PC-9 (cell line): ENCODE measurements at regions of chr14 and their contacts with region 1.

Region 1: DNA sequence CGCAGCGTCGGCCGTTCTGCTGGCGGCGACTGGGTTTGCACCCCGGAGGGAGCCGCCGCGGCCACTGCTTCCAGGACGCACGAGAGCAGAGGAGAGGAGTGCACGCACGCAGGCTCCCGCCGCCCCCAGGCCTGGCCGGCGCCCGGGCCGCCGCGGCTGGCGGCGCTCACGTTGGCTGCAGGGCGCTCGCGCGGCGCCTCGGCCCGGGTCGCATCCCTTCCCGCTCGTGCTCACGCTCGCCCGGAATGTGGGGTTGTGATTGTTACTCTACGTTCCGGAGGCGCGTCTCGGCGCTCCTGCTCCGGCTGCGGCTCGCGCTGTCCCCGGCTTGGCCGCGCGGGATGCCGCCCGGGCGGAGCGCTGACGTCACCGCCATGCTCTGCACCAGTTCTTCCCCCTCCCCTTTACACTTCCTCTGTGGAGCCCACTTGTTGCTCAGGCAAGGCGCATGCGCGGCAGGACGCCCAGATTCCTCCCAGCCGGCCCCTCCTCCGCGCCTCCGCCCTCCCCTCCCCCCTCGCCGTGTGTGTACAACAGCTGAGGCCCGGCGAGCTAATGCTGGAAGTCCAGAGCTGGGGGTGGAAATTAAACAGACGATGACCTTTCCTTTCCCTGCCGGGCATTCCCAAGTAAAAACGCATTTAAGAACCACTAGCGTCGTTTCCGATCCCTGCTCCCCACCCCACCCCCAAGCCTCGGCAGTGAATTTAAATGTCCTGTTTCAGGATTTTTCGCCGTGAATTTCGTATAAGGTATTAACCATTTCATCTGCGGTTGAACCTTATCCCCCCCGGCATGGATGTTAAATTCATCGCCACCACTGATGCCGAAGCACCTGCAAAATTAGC is at the start of gene IRF2BPL:
- DNase-seq: peak; percentile 97 to 100
- H3K4me3 ChIP-seq: peak within 1 kb of the TSS; percentile 64
- H3K27ac ChIP-seq: peak within 1 kb of the TSS; percentile 88
- H3K4me1 ChIP-seq: peaks cover 54% of the 10 kb centered on the region
- H3K27me3 ChIP-seq: no peaks in the 10 kb centered on the region
- CTCF ChIP-seq: no peak
- total RNA-seq, gene IRF2BPL: 74.6 and 84.5 TPM in 2 replicates

Region 2: GRCh38 chr14:76812211-76813044 is 216.2 kb before region 1 on chr14 and contains the start of gene ANGEL1:
- CTCF ChIA-PET with region 1: no interaction called
- POLR2A ChIA-PET with region 1: interaction called, 14 read pairs
- intact Hi-C with region 1: no loop called
- DNase-seq: peak; percentile 85 to 100
- H3K4me3 ChIP-seq: peak within 1 kb of the TSS; percentile 74
- H3K27ac ChIP-seq: no peak within 1 kb of the TSS
- H3K4me1 ChIP-seq: peaks cover 14% of the 10 kb centered on the region
- H3K27me3 ChIP-seq: peaks cover 17% of the 10 kb centered on the region
- CTCF ChIP-seq: no peak
- total RNA-seq, gene ANGEL1: 31.7 and 44.0 TPM in 2 replicates

Region 3: DNA sequence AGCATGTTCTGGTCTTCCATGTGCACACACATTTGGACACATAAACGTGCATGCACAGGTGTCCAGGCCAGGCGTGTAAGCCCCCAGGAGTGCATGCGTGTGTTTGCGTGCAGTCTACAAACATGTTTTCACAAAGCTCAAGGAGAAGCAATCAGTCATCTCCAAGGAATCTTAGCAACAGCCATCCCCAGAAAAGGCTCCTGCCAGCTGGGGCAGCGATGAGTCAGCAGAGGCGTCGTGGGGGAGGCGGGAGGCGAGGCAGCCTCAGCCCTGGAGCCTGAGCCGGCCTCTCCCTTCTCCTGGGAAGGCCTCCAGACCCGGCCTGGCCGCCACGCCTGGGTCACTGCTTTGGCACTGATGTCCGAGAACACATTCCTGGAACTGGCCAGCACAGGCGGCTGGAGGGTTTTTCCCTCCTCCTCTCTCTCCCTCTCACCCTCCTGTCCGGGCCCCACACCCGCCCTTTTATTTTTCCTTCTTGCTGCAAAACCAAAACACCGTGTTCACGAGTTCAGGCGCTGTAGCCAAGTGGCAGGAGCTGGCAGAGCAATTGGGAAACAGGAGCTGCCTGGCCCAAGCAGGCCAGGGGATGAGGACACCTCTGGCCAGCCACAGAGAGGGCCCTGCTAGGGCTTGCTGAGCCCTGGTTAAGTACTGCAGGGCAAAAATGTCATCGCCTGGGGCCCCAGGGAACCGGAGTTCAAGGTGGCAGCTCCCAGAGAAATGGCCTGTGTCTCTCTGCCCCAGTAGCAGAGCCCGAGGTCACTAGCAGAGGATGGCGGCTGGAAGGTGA is 109.7 kb before region 1 on chr14:
- CTCF ChIA-PET with region 1: interaction called, 5 read pairs
- POLR2A ChIA-PET with region 1: interaction called, 17 read pairs
- intact Hi-C with region 1: loop called (anchors 1 kb)
- DNase-seq: peak; percentile 98 to 100
- H3K4me3 ChIP-seq: peak overlapping the region; percentile 20; the same call in 1 of the 2 replicates
- H3K27ac ChIP-seq: peak overlapping the region; percentile 91
- H3K4me1 ChIP-seq: peaks cover 79% of the 10 kb centered on the region
- H3K27me3 ChIP-seq: no peaks in the 10 kb centered on the region
- CTCF ChIP-seq: peak; percentile 43; the same call in 1 of the 2 replicates

Region 4: GRCh38 chr14:76986231-76986565 is 42.4 kb before region 1 on chr14:
- CTCF ChIA-PET with region 1: no interaction called
- POLR2A ChIA-PET with region 1: no interaction called
- intact Hi-C with region 1: no loop called
- DNase-seq: no peak
- H3K4me3 ChIP-seq: no peak overlapping the region
- H3K27ac ChIP-seq: no peak overlapping the region
- H3K4me1 ChIP-seq: no peaks in the 10 kb centered on the region
- H3K27me3 ChIP-seq: no peaks in the 10 kb centered on the region
- CTCF ChIP-seq: no peak

Region 5: DNA sequence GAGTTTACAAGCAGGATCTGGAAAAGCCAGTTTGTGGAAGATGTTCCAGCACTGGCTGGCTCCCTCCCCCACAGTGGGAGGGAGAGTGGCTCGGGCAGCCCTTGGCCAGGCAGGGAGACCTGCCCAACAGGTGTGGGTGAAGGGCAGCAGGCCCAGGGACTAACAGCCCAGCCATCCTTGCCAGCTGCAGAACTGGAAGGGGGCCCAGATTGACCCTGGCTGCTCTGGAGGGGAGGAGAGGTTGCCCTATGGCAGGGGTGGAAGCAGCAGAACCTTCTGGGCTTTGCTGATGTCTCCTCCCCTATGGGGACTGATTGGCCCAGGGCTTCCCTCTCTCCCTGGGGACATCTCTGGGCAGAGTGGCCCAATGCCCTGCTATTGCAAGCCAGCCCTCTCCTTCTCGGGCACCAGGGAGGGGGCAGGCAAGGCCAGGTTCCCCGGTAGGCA is 20.6 kb before region 1 on chr14:
- CTCF ChIA-PET with region 1: interaction called, 13 read pairs
- POLR2A ChIA-PET with region 1: interaction called, 6 read pairs
- intact Hi-C with region 1: loop called (anchors 1 kb)
- DNase-seq: peak; percentile 95 to 99
- H3K4me3 ChIP-seq: peak overlapping the region; percentile 33; the same call in 1 of the 2 replicates
- H3K27ac ChIP-seq: peak overlapping the region; percentile 77
- H3K4me1 ChIP-seq: peaks cover 89% of the 10 kb centered on the region
- H3K27me3 ChIP-seq: no peaks in the 10 kb centered on the region
- CTCF ChIP-seq: no peak

Region 6: GRCh38 chr14:77059276-77059915 is 30.8 kb after region 1 on chr14:
- CTCF ChIA-PET with region 1: interaction called, 8 read pairs
- POLR2A ChIA-PET with region 1: interaction called, 28 read pairs
- intact Hi-C with region 1: loop called (anchors 2 kb)
- DNase-seq: peak; percentile 89 to 90
- H3K4me3 ChIP-seq: no peak overlapping the region
- H3K27ac ChIP-seq: 0 out of 2 replicates have a peak overlapping the region, but pooled peaks have one; percentile 2
- H3K4me1 ChIP-seq: peaks cover 28% of the 10 kb centered on the region
- H3K27me3 ChIP-seq: no peaks in the 10 kb centered on the region
- CTCF ChIP-seq: peak; percentile 47; the same call in 1 of the 2 replicates

Region 7: DNA sequence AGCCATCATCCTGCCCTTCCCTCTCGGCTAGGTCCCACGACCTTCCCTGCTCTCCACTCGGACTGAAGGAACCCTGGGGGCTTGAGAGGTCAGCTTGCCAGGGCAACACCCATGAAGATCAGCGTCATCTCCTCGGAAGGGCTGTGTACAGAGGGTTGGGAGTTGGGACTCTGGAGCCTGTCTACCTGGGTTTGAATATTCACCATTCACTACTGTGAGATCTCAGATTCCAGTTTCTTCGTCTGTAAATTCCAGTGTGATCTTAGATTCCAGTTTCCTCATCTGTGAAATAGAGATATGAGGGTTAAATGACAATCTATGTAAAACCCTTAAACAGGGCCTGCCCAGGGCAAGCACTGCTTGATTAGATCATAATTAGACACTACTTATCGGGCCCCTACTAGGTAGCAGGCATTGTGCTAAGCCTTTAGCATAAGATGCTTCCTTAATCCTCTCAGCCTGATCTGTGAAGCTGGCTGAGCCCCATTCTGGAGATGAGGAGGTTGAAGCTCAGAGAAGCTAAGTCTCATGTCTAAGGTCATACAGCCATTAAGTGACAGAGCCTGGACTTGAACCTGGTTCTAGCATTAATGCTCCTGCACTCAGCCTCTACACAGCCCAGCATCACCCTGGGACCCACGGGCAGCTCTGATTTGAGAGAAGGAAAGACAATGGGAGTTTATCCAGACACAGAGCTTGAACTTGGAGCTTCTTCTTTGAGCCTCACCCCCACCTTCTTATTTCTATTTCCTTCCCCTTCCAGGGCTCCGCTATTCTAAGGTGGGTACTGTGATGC is 113.6 kb after region 1 on chr14:
- CTCF ChIA-PET with region 1: interaction called, 16 read pairs
- POLR2A ChIA-PET with region 1: no interaction called
- intact Hi-C with region 1: no loop called
- DNase-seq: no peak
- H3K4me3 ChIP-seq: no peak overlapping the region
- H3K27ac ChIP-seq: no peak overlapping the region
- H3K4me1 ChIP-seq: no peaks in the 10 kb centered on the region
- H3K27me3 ChIP-seq: peaks cover 95% of the 10 kb centered on the region
- CTCF ChIP-seq: no peak